SK-N-SH (cell line): ENCODE measurements at regions of chr1 and their contacts with region 1.

Region 1: DNA sequence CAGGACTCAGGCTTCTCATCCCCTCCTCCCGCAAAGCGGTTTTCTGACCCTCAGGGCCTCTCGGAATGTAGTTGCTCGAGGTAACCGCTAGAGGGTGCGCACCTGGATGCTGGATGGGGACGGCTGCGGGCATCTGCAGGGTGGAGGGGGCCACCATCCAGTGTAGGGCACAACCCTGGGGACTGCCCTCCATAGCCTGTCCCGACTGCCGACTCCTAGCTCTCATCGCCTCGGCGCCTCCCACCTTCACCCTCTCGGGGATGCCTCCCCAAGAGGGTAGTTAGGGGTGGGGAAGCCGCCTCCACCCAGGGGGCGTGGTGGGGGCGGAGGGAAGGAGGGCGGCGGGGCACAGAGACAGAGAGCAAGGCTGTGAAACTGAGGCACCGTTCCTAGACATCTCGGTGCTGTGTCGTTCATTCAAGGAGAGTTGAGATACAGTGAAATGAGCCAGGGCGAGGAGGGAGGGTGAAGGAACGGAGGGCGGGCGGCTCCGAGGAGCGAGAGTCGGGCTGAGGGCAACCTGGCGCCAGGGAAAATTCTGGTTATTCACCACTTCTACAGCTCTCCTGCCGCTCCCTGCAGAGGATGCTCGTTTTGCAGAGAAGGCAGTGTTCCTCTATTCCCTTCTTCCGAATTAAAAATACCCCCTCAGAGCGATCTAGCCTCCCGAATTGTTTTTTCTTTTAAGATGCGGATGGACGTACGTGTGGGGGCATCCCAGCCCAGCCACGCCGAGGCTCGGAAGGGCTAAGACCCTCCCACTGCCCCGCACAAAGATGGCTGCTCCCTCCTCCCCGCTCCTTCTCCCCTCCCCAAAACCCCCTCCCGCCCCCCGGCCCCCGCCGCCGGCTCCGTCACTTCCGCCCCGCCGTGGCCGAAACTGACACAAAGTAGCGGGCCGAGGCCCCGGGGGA is at the start of gene ATP8B2:
- DNase-seq: peak; percentile 92
- H3K4me3 ChIP-seq: peak within 1 kb of the TSS; percentile 78 to 84
- H3K27ac ChIP-seq: peak within 1 kb of the TSS; percentile 88 to 92
- H3K4me1 ChIP-seq: peaks cover 21 to 43% of the 10 kb centered on the region in 2 experiments; a peak in 3 of 4 replicates
- H3K27me3 ChIP-seq: no peaks in the 10 kb centered on the region; the same call in 1 of the 2 replicates
- CTCF ChIP-seq: peak; percentile 96
- EP300 ChIP-seq: no peak
- RAD21 ChIP-seq: peak; percentile 51
- polyA plus RNA-seq, gene ATP8B2: 42.7 and 50.7 TPM in 2 replicates

Region 2: GRCh38 chr1:154206196-154206595 is 118.7 kb before region 1 on chr1 and contains the start of gene CFAP141:
- CTCF ChIA-PET with region 1: no interaction called
- POLR2A ChIA-PET with region 1: no interaction called
- DNase-seq: no peak
- H3K4me3 ChIP-seq: no peak within 1 kb of the TSS
- H3K27ac ChIP-seq: peak within 1 kb of the TSS in 1 of 2 experiments; percentile 23; a peak in 2 of 4 replicates
- H3K4me1 ChIP-seq: no peaks in the 10 kb centered on the region
- H3K27me3 ChIP-seq: no peaks in the 10 kb centered on the region
- CTCF ChIP-seq: no peak
- EP300 ChIP-seq: no peak
- RAD21 ChIP-seq: no peak
- polyA plus RNA-seq, gene CFAP141: not detected in 2 replicates

Region 3: DNA sequence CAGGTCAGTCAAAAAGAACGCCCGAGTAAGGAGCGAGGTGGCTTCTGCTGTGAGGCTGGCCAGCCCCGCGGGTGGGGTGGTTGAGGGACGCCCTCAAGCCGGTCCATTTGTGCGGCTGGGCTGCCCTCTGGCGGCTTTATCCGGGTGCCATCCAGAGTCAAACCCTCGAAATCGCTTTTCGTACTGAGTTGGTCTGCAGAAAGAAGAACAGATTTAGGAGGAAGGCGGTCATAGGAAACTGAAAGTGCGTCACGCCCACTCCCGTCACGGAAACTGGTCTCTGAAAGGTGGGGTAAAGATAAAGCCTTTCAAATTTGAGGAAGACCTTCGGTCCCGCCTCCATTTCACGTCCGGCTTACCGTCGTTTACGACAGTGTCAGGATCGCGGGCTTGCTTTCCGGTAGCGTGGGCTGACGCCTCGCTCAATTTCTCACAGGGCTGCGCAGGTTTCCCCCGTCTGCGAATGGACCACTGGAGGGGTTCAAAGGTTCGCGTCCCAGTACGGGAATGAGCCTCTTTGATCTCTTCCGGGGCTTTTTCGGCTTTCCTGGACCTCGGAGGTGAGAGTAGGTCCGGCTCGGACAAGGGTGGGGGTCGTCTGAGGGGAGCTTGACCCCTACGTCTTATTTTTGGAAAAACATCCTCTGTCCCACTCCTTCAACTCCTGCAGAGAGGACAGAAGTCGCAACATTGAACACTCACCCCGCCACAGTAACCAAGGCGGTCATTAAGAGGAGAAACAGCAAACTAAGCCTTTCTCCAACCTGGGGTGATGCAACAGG is 52.5 kb before region 1 on chr1 and contains the start of gene HAX1:
- CTCF ChIA-PET with region 1: interaction called, 10 read pairs
- POLR2A ChIA-PET with region 1: no interaction called
- DNase-seq: peak; percentile 89
- H3K4me3 ChIP-seq: peak within 1 kb of the TSS; percentile 89 to 91
- H3K27ac ChIP-seq: peak within 1 kb of the TSS; percentile 71 to 89
- H3K4me1 ChIP-seq: peaks cover 0 to 9% of the 10 kb centered on the region in 2 experiments; a peak in 1 of 4 replicates
- H3K27me3 ChIP-seq: no peaks in the 10 kb centered on the region
- CTCF ChIP-seq: peak; percentile 97
- EP300 ChIP-seq: 0 out of 4 replicates have a peak, but pooled peaks of 1 of the 2 experiments have one; percentile 2
- RAD21 ChIP-seq: peak; percentile 79
- polyA plus RNA-seq, gene HAX1: 74.1 and 106 TPM in 2 replicates

Region 4: DNA sequence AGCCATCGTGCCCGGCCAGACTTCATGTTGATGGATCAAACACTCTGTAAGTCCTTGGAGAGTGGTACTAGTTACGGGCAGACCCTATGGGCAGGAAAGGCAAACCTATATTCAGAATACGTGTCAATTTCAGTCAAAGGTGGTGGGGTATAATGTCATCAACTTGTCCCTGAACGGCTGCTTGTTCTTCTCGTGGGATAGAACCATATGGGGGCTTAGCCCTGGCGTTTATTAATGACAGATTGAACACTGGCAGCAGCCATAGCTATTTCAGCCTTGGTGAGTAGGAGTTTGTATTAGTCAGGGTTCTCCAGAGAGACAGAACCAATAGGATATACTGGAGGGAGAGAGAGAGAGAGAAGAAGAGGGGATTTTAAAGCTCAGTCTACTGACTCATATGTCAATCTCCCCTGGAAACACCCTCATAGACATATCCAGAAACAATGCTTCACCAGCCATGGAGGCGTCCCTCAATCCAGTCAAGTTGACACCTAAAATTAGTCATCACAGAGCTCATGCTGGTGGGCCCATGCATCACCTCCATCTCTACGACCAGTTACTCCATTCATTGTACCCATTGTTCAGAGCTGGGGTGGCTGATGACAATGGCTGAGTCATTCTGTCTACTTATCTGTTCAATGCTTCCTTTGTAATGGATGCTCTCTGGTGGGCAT is 20.1 kb before region 1 on chr1:
- CTCF ChIA-PET with region 1: interaction called, 12 read pairs
- POLR2A ChIA-PET with region 1: no interaction called
- DNase-seq: no peak
- H3K4me3 ChIP-seq: no peak overlapping the region
- H3K27ac ChIP-seq: no peak overlapping the region; a peak in 1 of 4 replicates
- H3K4me1 ChIP-seq: no peaks in the 10 kb centered on the region
- H3K27me3 ChIP-seq: no peaks in the 10 kb centered on the region; the same call in 1 of the 2 replicates
- CTCF ChIP-seq: no peak
- EP300 ChIP-seq: no peak
- RAD21 ChIP-seq: no peak

Region 5: GRCh38 chr1:154344977-154345837 is 20.3 kb after region 1 on chr1:
- CTCF ChIA-PET with region 1: interaction called, 20 read pairs
- POLR2A ChIA-PET with region 1: no interaction called
- DNase-seq: peak; percentile 60
- H3K4me3 ChIP-seq: no peak overlapping the region
- H3K27ac ChIP-seq: no peak overlapping the region
- H3K4me1 ChIP-seq: no peaks in the 10 kb centered on the region
- H3K27me3 ChIP-seq: no peaks in the 10 kb centered on the region
- CTCF ChIP-seq: peak; percentile 71
- EP300 ChIP-seq: no peak
- RAD21 ChIP-seq: peak; percentile 36